ENCODE measurements at regions of chr7 and their contacts with region 1.

Region 1: GRCh38 chr7:31122649-31123058 is 70.5 kb downstream of the ADCYAP1R1 start:
- DNase-seq: peak; percentile 74 to 75
- H3K4me3 ChIP-seq: no peak overlapping the region
- H3K27ac ChIP-seq: no peak overlapping the region
- H3K4me1 ChIP-seq: peaks cover 0 to 3% (median 1%) of the 10 kb centered on the region in 4 experiments; a peak in 4 of 7 replicates
- H3K27me3 ChIP-seq: no peaks in the 10 kb centered on the region; a peak in 2 of 7 replicates
- CTCF ChIP-seq: peak; percentile 68 to 95 (median 87)
- EP300 ChIP-seq: no peak
- POLR2A ChIP-seq: no peak
- RAD21 ChIP-seq: peak; percentile 93 to 96

Region 2: GRCh38 chr7:30938435-30939316 is 184.0 kb before region 1 on chr7:
- CTCF ChIA-PET with region 1: interaction called, 23 read pairs
- POLR2A ChIA-PET with region 1: interaction called, 3 read pairs
- DNase-seq: peak; percentile 91 to 98
- H3K4me3 ChIP-seq: peak overlapping the region in 3 of 4 experiments; percentile 31 to 52 (median 34); a peak in 6 of 8 replicates
- H3K27ac ChIP-seq: peak overlapping the region; percentile 23; the same call in 1 of the 2 replicates
- H3K4me1 ChIP-seq: peaks cover 0 to 5% (median 4%) of the 10 kb centered on the region in 4 experiments; a peak in 6 of 7 replicates
- H3K27me3 ChIP-seq: 0 out of 7 replicates have a peak, but pooled peaks cover 0 to 2% (median 0%) of the 10 kb centered on the region in 4 experiments
- CTCF ChIP-seq: peak; percentile 96 to 100 (median 99)
- EP300 ChIP-seq: no peak
- POLR2A ChIP-seq: peak in 1 of 2 experiments; percentile 62; a peak in 2 of 3 replicates
- RAD21 ChIP-seq: peak; percentile 72 to 76

Region 3: DNA sequence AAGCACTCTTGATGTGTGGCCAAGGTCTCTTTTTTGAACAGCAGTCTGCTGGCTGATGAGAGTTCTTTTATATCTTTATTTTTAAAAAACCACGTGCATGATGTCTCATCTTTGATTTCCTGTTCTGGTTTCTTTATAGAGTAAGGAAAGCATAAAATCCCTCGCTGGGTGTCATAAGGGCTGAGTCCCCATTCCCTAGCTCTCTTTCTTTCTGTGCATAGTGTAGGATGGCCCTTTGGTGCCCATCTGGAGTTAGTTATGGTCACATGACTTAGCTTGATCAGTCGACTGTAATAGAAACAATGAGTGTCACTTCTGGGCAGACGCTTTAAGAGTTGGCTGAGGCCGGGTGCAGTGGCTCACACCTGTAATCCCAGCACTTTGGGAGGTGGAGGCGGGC is 120.4 kb before region 1 on chr7:
- CTCF ChIA-PET with region 1: interaction called, 11 read pairs
- POLR2A ChIA-PET with region 1: no interaction called
- DNase-seq: no peak
- H3K4me3 ChIP-seq: no peak overlapping the region
- H3K27ac ChIP-seq: no peak overlapping the region
- H3K4me1 ChIP-seq: 0 out of 7 replicates have a peak, but pooled peaks cover 0 to 3% (median 0%) of the 10 kb centered on the region in 4 experiments
- H3K27me3 ChIP-seq: no peaks in the 10 kb centered on the region
- CTCF ChIP-seq: no peak
- EP300 ChIP-seq: no peak
- POLR2A ChIP-seq: no peak
- RAD21 ChIP-seq: no peak

Region 4: GRCh38 chr7:31043051-31043471 is 79.6 kb before region 1 on chr7:
- CTCF ChIA-PET with region 1: interaction called, 14 read pairs
- POLR2A ChIA-PET with region 1: no interaction called
- DNase-seq: peak in 1 of 2 experiments; percentile 67
- H3K4me3 ChIP-seq: peak overlapping the region in 1 of 4 experiments; percentile 20; a peak in 1 of 8 replicates
- H3K27ac ChIP-seq: no peak overlapping the region
- H3K4me1 ChIP-seq: peaks cover 2 to 12% (median 8%) of the 10 kb centered on the region in 4 experiments
- H3K27me3 ChIP-seq: peaks cover 0 to 7% (median 1%) of the 10 kb centered on the region in 4 experiments; a peak in 1 of 7 replicates
- CTCF ChIP-seq: no peak
- EP300 ChIP-seq: no peak
- POLR2A ChIP-seq: no peak
- RAD21 ChIP-seq: 0 out of 4 replicates have a peak, but pooled peaks of 1 of the 2 experiments have one; percentile 0

Region 5: GRCh38 chr7:31065021-31065593 is 57.5 kb before region 1 on chr7:
- CTCF ChIA-PET with region 1: interaction called, 215 read pairs
- POLR2A ChIA-PET with region 1: interaction called, 6 read pairs
- DNase-seq: no peak
- H3K4me3 ChIP-seq: no peak overlapping the region
- H3K27ac ChIP-seq: no peak overlapping the region
- H3K4me1 ChIP-seq: peaks cover 0 to 3% (median 2%) of the 10 kb centered on the region in 4 experiments; a peak in 2 of 7 replicates
- H3K27me3 ChIP-seq: no peaks in the 10 kb centered on the region
- CTCF ChIP-seq: peak; percentile 28 to 50 (median 34)
- EP300 ChIP-seq: no peak
- POLR2A ChIP-seq: no peak
- RAD21 ChIP-seq: peak; percentile 61 to 71

Region 6: GRCh38 chr7:31134246-31135188 is 11.9 kb after region 1 on chr7:
- CTCF ChIA-PET with region 1: interaction called, 68 read pairs
- POLR2A ChIA-PET with region 1: no interaction called
- DNase-seq: peak; percentile 56 to 84
- H3K4me3 ChIP-seq: peak overlapping the region in 1 of 4 experiments; percentile 26; a peak in 1 of 8 replicates
- H3K27ac ChIP-seq: no peak overlapping the region
- H3K4me1 ChIP-seq: no peaks in the 10 kb centered on the region; a peak in 1 of 7 replicates
- H3K27me3 ChIP-seq: no peaks in the 10 kb centered on the region
- CTCF ChIP-seq: peak; percentile 50 to 83 (median 82)
- EP300 ChIP-seq: no peak
- POLR2A ChIP-seq: no peak
- RAD21 ChIP-seq: peak; percentile 87 to 93